A673 (cell line): ENCODE measurements at regions of chr3 and their contacts with region 1.

Region 1: DNA sequence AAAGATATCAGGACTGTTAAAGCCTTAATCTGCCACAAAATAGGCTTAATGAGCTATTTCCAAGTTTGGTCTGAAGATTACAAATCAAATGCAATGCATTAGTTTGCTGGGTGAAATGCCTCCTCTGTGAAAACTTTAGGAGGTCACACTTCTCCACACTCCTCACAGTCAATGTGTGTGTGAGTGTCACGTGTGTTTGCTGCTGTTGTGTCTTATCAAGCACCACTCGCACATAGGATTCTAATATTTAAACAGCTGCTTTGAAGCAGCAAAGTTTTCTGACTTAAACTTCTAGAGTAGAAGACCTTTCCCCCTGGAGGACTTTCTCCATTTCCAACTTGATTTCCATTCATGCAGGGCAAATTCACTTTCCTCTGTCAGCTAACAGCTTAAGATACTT is 203.2 kb upstream of the PEX5L start:
- DNase-seq: no peak
- H3K4me3 ChIP-seq: no peak overlapping the region
- H3K27ac ChIP-seq: no peak overlapping the region
- H3K4me1 ChIP-seq: no peaks in the 10 kb centered on the region
- H3K27me3 ChIP-seq: no peaks in the 10 kb centered on the region
- CTCF ChIP-seq: no peak

Region 2: DNA sequence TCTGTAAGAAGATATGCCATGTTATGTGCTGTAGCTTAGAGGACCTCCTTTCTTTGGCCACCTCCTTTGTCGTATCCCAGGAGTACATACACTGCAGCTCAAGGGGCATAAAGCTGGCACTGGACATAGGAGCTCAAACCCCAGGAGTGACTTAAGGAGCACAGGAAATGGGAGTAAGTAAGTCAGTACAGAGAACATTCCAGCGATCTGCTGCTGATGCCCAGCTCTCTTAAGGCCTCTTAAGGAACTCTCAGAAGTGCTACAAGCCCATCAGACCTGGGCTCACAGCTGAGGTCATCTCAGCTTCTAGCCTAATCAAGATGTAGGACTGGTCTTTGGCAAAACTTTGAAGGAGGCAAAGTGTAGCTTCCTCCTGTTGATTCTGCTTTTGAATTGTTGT is 698.8 kb before region 1 on chr3:
- CTCF ChIA-PET with region 1: no interaction called
- POLR2A ChIA-PET with region 1: interaction called, 14 read pairs
- intact Hi-C with region 1: no loop called
- DNase-seq: no peak
- H3K4me3 ChIP-seq: no peak overlapping the region
- H3K27ac ChIP-seq: no peak overlapping the region
- H3K4me1 ChIP-seq: no peaks in the 10 kb centered on the region
- H3K27me3 ChIP-seq: no peaks in the 10 kb centered on the region
- CTCF ChIP-seq: no peak

Region 3: GRCh38 chr3:180267202-180267843 is 27.4 kb after region 1 on chr3:
- CTCF ChIA-PET with region 1: no interaction called
- POLR2A ChIA-PET with region 1: no interaction called
- intact Hi-C with region 1: no loop called
- DNase-seq: no peak
- H3K4me3 ChIP-seq: no peak overlapping the region
- H3K27ac ChIP-seq: no peak overlapping the region
- H3K4me1 ChIP-seq: no peaks in the 10 kb centered on the region
- H3K27me3 ChIP-seq: peaks cover 4% of the 10 kb centered on the region
- CTCF ChIP-seq: no peak